T-cell (primary cell): ENCODE measurements at regions of chr14 and their contacts with region 1.

Region 1: GRCh38 chr14:58501214-58501816 is 73.8 kb downstream of the KIAA0586 start:
- DNase-seq: peak in 12 of 35 experiments; percentile 0 to 66 (median 15)
- ATAC-seq: peak; percentile 52 to 71 (median 62)
- H3K4me3 ChIP-seq: no peak overlapping the region
- H3K4me3 Mint-ChIP-seq: no peak overlapping the region
- H3K27ac ChIP-seq: no peak overlapping the region
- H3K27ac Mint-ChIP-seq: no peak overlapping the region
- H3K4me1 ChIP-seq: no peaks in the 10 kb centered on the region
- H3K4me1 Mint-ChIP-seq: no peaks in the 10 kb centered on the region
- H3K27me3 ChIP-seq: no peaks in the 10 kb centered on the region
- H3K27me3 Mint-ChIP-seq: no peaks in the 10 kb centered on the region

Region 2: DNA sequence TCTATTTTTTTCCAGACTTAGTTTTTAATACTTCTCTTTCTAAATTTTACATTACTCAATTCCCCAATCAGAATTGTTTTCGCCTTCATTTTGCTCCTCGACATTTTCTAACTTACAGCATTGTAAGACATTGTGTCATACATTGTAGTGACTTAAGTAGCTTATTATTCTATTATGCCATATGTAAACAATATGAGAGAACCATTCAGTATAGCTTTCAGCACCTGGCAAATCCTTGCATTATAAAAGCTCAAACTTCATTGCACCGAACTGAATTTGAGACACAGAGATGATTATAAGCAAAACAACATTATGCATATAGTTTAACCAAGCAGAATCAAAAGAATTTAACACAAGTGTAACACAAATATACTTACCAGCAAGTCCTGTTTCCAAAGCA is 1279.4 kb before region 1 on chr14:
- CTCF ChIA-PET with region 1: no interaction called
- POLR2A ChIA-PET with region 1: no interaction called
- DNase-seq: no peak
- ATAC-seq: no peak
- H3K4me3 ChIP-seq: no peak overlapping the region
- H3K4me3 Mint-ChIP-seq: no peak overlapping the region
- H3K27ac ChIP-seq: no peak overlapping the region
- H3K27ac Mint-ChIP-seq: no peak overlapping the region
- H3K4me1 ChIP-seq: no peaks in the 10 kb centered on the region
- H3K4me1 Mint-ChIP-seq: no peaks in the 10 kb centered on the region
- H3K27me3 ChIP-seq: no peaks in the 10 kb centered on the region
- H3K27me3 Mint-ChIP-seq: no peaks in the 10 kb centered on the region

Region 3: GRCh38 chr14:58427281-58428117 is 73.8 kb before region 1 on chr14 and contains the starts of genes KIAA0586 and TIMM9:
- CTCF ChIA-PET with region 1: no interaction called
- POLR2A ChIA-PET with region 1: no interaction called
- DNase-seq: peak; percentile 84 to 98 (median 96)
- ATAC-seq: peak; percentile 93 to 94 (median 94)
- H3K4me3 ChIP-seq: peak within 1 kb of the TSS; percentile 81 to 97
- H3K4me3 Mint-ChIP-seq: peak within 1 kb of the TSS; percentile 80 to 95 (median 93)
- H3K27ac ChIP-seq: peak within 1 kb of the TSS; percentile 94
- H3K27ac Mint-ChIP-seq: peak within 1 kb of the TSS; percentile 97 to 99
- H3K4me1 ChIP-seq: peaks cover 12 to 14% of the 10 kb centered on the region in 2 experiments
- H3K4me1 Mint-ChIP-seq: peaks cover 47 to 54% (median 50%) of the 10 kb centered on the region in 3 donors
- H3K27me3 ChIP-seq: no peaks in the 10 kb centered on the region
- H3K27me3 Mint-ChIP-seq: no peaks in the 10 kb centered on the region
- total RNA-seq, gene KIAA0586: 32.5 to 37.8 (median 33.7) TPM
- total RNA-seq, gene TIMM9: 23.4 to 37.4 (median 29.1) TPM

Region 4: GRCh38 chr14:58549105-58549755 is 47.9 kb after region 1 on chr14:
- CTCF ChIA-PET with region 1: no interaction called
- POLR2A ChIA-PET with region 1: no interaction called
- DNase-seq: no peak
- ATAC-seq: no peak
- H3K4me3 ChIP-seq: no peak overlapping the region
- H3K4me3 Mint-ChIP-seq: no peak overlapping the region
- H3K27ac ChIP-seq: no peak overlapping the region
- H3K27ac Mint-ChIP-seq: peak overlapping the region in 1 of 2 donors; percentile 1
- H3K4me1 ChIP-seq: no peaks in the 10 kb centered on the region
- H3K4me1 Mint-ChIP-seq: no peaks in the 10 kb centered on the region
- H3K27me3 ChIP-seq: no peaks in the 10 kb centered on the region
- H3K27me3 Mint-ChIP-seq: no peaks in the 10 kb centered on the region

Region 5: GRCh38 chr14:59055439-59056045 is 554.2 kb after region 1 on chr14:
- CTCF ChIA-PET with region 1: interaction called, 14 to 15 read pairs
- POLR2A ChIA-PET with region 1: no interaction called
- DNase-seq: peak in 14 of 35 experiments; percentile 4 to 50 (median 14)
- ATAC-seq: peak in 3 of 4 experiments; percentile 40 to 64 (median 45)
- H3K4me3 ChIP-seq: no peak overlapping the region
- H3K4me3 Mint-ChIP-seq: no peak overlapping the region
- H3K27ac ChIP-seq: no peak overlapping the region
- H3K27ac Mint-ChIP-seq: no peak overlapping the region
- H3K4me1 ChIP-seq: no peaks in the 10 kb centered on the region
- H3K4me1 Mint-ChIP-seq: no peaks in the 10 kb centered on the region
- H3K27me3 ChIP-seq: no peaks in the 10 kb centered on the region
- H3K27me3 Mint-ChIP-seq: peaks cover 5 to 17% of the 10 kb centered on the region in 2 donors